Activated CD4-positive, alpha-beta memory T cell treated with anti-CD3 and anti-CD28 coated beads for 36 hours (primary cell): ENCODE measurements at regions of chr16 and their contacts with region 1.

Region 1: DNA sequence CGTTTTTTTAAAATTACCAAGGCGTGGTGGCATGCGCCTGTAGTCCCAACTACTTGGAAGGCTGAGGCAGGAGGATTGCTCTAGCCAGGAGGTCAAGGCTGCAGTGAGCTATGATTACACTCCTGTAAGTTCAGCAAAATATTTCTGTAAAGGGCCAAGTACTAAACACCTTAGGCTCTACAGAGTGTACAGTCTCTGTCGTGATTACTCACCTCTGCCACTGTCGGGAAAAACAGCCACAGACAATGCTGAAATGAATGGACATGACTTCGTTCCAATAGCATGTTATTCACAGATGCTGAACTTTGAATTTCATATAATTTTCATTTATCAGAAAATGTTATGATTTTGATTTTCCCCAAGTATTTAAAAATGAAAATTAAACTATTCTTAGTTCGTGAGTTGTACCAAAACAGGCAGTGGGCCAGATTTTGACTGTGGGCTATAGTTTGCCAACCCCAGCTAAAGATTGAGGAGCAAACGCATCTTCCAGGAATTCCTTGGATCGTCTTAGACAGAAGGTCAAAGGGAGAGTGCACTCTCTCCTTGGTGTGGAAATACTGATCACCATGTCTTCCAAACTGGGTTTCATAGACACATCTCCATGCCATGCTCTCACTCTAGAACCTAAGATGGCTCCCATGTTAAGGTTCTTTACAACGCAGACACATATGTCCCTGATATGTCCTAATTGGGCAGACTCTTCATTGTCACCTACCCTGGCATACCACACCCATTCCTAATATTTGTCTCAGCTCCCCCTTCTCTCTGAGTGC is 89.5 kb downstream of the MARF1 start:
- DNase-seq: peak; percentile 77
- H3K4me3 Mint-ChIP-seq: no peak overlapping the region
- H3K27ac Mint-ChIP-seq: no peak overlapping the region
- H3K4me1 Mint-ChIP-seq: peaks cover 21% of the 10 kb centered on the region
- H3K27me3 Mint-ChIP-seq: no peaks in the 10 kb centered on the region

Region 2: GRCh38 chr16:15427648-15428239 is 125.8 kb before region 1 on chr16:
- CTCF ChIA-PET with region 1: interaction called, 32 read pairs
- POLR2A ChIA-PET with region 1: no interaction called
- intact Hi-C with region 1: loop called (anchors 5 kb)
- DNase-seq: peak; percentile 68
- H3K4me3 Mint-ChIP-seq: no peak overlapping the region
- H3K27ac Mint-ChIP-seq: no peak overlapping the region
- H3K4me1 Mint-ChIP-seq: peaks cover 2% of the 10 kb centered on the region
- H3K27me3 Mint-ChIP-seq: peaks cover 2% of the 10 kb centered on the region

Region 3: DNA sequence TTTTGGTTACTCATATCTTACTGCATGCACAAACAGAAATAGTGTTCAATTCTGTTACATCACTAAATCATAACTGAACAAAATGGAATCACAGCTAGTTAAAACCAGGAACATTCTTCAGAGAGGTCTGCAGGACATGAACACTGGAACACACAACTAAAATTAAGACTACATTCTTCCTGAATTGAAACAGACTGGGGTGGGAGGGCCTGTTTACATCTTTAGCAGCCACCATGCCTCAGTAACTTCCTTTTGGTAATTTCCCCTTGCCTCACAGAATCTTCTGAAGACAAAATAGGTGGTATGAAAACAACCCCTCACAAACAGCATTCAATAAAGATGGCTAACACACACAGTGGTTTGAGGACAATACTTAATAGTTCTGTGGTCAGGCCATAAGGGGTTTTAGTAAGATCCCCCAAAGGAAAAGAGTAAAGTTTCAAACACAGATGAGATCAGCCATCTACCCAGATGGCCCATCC is 82.9 kb after region 1 on chr16:
- CTCF ChIA-PET with region 1: no interaction called
- POLR2A ChIA-PET with region 1: no interaction called
- intact Hi-C with region 1: loop called (anchors 2 kb)
- DNase-seq: peak; percentile 15
- H3K4me3 Mint-ChIP-seq: peak overlapping the region; percentile 30
- H3K27ac Mint-ChIP-seq: peak overlapping the region; percentile 94
- H3K4me1 Mint-ChIP-seq: peaks cover 80% of the 10 kb centered on the region
- H3K27me3 Mint-ChIP-seq: no peaks in the 10 kb centered on the region